ENCODE measurements at regions of chr9 and their contacts with region 1.

Region 1: DNA sequence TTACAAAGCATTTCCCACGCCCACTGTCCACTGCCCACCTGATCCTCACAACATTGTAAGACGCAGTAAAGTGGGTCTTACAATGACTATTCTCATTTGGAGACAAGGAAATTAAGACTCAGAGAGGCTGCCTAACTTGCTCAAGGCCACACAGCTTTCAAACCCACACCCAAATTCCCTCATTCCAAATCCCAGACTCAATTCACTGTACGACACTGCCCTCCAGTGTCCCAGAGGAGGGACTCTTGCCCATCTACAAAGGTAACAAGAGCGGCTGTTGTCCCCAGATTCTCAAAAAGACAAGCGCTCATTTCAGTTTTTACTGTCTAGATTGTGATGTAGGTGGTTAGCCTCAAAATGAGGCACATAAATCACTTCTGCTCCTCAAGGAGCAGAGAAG is 184.6 kb downstream of the ACTL7B start:
- DNase-seq: peak; percentile 64
- H3K4me3 Mint-ChIP-seq: no peak overlapping the region
- H3K27ac Mint-ChIP-seq: peak overlapping the region; percentile 44
- H3K4me1 Mint-ChIP-seq: peaks cover 58% of the 10 kb centered on the region
- H3K27me3 Mint-ChIP-seq: no peaks in the 10 kb centered on the region
- CTCF ChIP-seq: peak; percentile 86

Region 2: GRCh38 chr9:107421947-107422793 is 1249.0 kb before region 1 on chr9:
- CTCF ChIA-PET with region 1: no interaction called
- POLR2A ChIA-PET with region 1: no interaction called
- intact Hi-C with region 1: loop called (anchors 1 kb)
- DNase-seq: peak; percentile 87
- H3K4me3 Mint-ChIP-seq: no peak overlapping the region
- H3K27ac Mint-ChIP-seq: no peak overlapping the region
- H3K4me1 Mint-ChIP-seq: peaks cover 11% of the 10 kb centered on the region
- H3K27me3 Mint-ChIP-seq: no peaks in the 10 kb centered on the region
- CTCF ChIP-seq: peak; percentile 56

Region 3: DNA sequence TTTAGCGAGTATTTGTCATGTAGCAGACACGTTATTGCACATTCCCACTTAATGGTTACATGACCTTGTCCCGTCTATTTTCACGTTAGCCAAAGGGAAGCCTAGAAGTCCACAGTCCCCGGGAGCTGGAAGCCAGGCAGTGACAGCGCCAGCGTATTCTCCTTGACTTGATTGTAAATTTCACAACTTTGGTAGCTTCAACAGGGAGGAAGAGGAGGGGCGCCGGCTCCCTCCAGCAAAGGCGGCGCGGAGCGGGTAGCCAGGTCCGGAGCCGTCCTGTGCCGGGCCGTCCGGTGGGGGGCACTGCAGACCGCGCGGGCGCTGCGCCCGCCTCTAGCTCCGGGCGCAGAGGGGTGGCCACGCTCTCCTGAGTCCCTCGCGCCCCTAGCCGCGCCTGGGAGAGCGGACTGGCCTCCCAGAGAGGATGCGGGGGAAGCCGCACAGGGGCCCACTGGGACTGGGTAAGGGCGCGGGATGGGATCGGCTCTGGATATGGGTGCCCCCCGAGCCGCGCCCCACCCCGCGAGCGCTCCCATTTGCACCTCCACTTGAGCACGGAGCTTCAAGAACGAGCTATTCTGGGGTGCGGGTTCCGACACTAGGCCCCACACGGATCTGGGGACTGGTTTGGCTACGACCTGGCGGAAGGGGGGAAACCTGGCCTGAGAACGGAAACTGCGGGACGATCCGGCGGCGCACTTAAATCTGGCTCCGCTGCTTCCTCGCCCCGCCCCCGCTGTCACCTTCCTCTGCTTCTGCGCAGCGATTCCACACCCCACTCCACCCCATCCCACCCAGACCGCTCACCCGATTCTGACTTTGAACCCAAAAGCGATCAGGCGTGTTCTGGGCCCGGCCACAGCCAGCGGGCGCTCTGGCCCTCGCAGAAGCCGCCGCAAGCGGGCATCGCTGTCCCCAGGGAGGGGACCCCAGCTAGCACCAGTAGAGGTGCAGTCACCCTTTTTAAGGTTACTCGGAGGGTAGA is 1205.4 kb before region 1 on chr9:
- CTCF ChIA-PET with region 1: no interaction called
- POLR2A ChIA-PET with region 1: no interaction called
- intact Hi-C with region 1: loop called (anchors 5 kb)
- DNase-seq: peak; percentile 61
- H3K4me3 Mint-ChIP-seq: peak overlapping the region; percentile 69
- H3K27ac Mint-ChIP-seq: no peak overlapping the region
- H3K4me1 Mint-ChIP-seq: no peaks in the 10 kb centered on the region
- H3K27me3 Mint-ChIP-seq: no peaks in the 10 kb centered on the region
- CTCF ChIP-seq: peak; percentile 95

Region 4: GRCh38 chr9:107484117-107484723 is 1187.0 kb before region 1 on chr9:
- CTCF ChIA-PET with region 1: interaction called, 3 read pairs
- POLR2A ChIA-PET with region 1: interaction called, 3 read pairs
- intact Hi-C with region 1: loop called (anchors 5 kb)
- DNase-seq: peak; percentile 81
- H3K4me3 Mint-ChIP-seq: no peak overlapping the region
- H3K27ac Mint-ChIP-seq: no peak overlapping the region
- H3K4me1 Mint-ChIP-seq: peaks cover 31% of the 10 kb centered on the region
- H3K27me3 Mint-ChIP-seq: no peaks in the 10 kb centered on the region
- CTCF ChIP-seq: peak; percentile 55

Region 5: DNA sequence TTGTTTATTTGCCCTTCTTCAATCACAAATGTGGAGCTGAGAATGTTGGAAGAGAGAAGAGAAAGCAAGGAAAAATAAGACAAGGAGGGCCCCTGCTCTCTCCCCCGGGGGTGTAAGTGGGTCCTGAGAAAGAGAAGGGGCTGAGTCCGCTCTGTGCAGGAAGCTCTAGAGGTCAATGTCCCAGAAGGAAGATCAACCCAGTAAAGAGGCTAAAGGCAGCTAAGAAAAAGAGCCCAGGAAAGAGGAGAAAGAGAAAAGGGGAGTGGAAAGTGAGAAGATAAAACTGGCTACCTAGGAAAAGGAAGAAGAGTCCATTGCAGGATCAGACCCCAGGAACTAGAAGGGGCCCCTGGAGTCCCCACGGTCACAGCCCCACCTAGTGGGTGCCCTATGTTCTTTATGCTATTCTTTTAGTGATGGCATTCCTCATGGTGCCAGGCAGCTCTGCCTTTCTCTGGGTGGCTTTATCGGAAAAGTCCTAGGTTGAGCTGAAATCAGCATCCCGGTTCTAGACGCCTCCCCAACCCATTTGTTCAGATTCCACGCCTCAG is 398.8 kb before region 1 on chr9:
- CTCF ChIA-PET with region 1: interaction called, 3 read pairs
- POLR2A ChIA-PET with region 1: no interaction called
- intact Hi-C with region 1: loop called (anchors 5 kb)
- DNase-seq: peak; percentile 73
- H3K4me3 Mint-ChIP-seq: peak overlapping the region; percentile 52
- H3K27ac Mint-ChIP-seq: peak overlapping the region; percentile 93
- H3K4me1 Mint-ChIP-seq: peaks cover 30% of the 10 kb centered on the region
- H3K27me3 Mint-ChIP-seq: no peaks in the 10 kb centered on the region
- CTCF ChIP-seq: peak; percentile 79

Region 6: GRCh38 chr9:108412755-108413154 is 258.4 kb before region 1 on chr9:
- CTCF ChIA-PET with region 1: interaction called, 8 read pairs
- POLR2A ChIA-PET with region 1: no interaction called
- intact Hi-C with region 1: loop called (anchors 1 kb)
- DNase-seq: peak; percentile 19
- H3K4me3 Mint-ChIP-seq: no peak overlapping the region
- H3K27ac Mint-ChIP-seq: no peak overlapping the region
- H3K4me1 Mint-ChIP-seq: peaks cover 11% of the 10 kb centered on the region
- H3K27me3 Mint-ChIP-seq: no peaks in the 10 kb centered on the region
- CTCF ChIP-seq: no peak

Region 7: GRCh38 chr9:108456903-108457302 is 214.3 kb before region 1 on chr9:
- CTCF ChIA-PET with region 1: no interaction called
- POLR2A ChIA-PET with region 1: no interaction called
- intact Hi-C with region 1: no loop called
- DNase-seq: no peak
- H3K4me3 Mint-ChIP-seq: no peak overlapping the region
- H3K27ac Mint-ChIP-seq: no peak overlapping the region
- H3K4me1 Mint-ChIP-seq: peaks cover 6% of the 10 kb centered on the region
- H3K27me3 Mint-ChIP-seq: no peaks in the 10 kb centered on the region
- CTCF ChIP-seq: no peak

Region 8: DNA sequence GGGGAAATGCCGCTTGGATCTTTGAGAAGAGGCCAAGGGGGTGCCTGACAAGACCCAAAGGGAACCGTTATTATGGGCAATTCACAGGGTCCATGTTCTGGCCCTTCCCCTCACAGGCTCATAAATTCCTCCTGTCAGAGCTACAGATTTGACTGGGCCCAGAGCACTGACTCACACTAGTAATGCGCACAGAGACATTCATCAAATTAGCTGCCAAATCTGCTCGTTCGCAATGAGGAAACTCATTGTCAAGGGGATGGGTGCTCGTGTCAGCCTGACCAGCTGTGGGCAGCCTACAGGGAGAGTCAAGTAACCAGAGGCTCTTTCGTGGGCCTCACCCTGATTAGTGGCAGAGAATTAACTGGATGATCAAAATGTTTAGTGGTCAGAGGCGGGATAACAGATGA is 192.7 kb before region 1 on chr9:
- CTCF ChIA-PET with region 1: interaction called, 4 read pairs
- POLR2A ChIA-PET with region 1: interaction called, 3 read pairs
- intact Hi-C with region 1: loop called (anchors 1 kb)
- DNase-seq: peak; percentile 97
- H3K4me3 Mint-ChIP-seq: peak overlapping the region; percentile 37
- H3K27ac Mint-ChIP-seq: peak overlapping the region; percentile 89
- H3K4me1 Mint-ChIP-seq: peaks cover 47% of the 10 kb centered on the region
- H3K27me3 Mint-ChIP-seq: no peaks in the 10 kb centered on the region
- CTCF ChIP-seq: no peak

Region 9: DNA sequence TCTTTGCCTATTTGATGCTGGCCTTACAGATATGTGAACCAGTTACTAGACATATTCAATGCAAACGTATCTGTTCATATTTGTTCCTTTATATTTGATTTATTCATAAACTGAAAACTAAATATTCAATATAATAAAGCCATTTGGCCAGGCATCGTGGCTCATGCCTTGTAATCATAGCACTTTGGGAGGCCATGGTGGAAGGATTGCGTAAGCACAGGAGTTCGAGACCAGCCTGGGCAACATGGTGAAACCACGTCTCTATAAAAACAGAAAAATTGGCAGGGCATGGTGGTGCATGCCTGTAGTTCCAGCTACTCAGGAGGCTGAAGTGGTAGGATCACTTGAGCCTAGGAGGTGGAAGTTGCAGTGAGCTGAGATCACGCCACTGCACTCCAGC is 391.4 kb after region 1 on chr9:
- CTCF ChIA-PET with region 1: no interaction called
- POLR2A ChIA-PET with region 1: no interaction called
- intact Hi-C with region 1: no loop called
- DNase-seq: no peak
- H3K4me3 Mint-ChIP-seq: no peak overlapping the region
- H3K27ac Mint-ChIP-seq: no peak overlapping the region
- H3K4me1 Mint-ChIP-seq: peaks cover 25% of the 10 kb centered on the region
- H3K27me3 Mint-ChIP-seq: no peaks in the 10 kb centered on the region
- CTCF ChIP-seq: no peak

Measured in MCF 10A (cell line).